Esophagus muscularis mucosa (tissue), 4 donors: ENCODE measurements at regions of chr3 and their contacts with region 1.

Region 1: DNA sequence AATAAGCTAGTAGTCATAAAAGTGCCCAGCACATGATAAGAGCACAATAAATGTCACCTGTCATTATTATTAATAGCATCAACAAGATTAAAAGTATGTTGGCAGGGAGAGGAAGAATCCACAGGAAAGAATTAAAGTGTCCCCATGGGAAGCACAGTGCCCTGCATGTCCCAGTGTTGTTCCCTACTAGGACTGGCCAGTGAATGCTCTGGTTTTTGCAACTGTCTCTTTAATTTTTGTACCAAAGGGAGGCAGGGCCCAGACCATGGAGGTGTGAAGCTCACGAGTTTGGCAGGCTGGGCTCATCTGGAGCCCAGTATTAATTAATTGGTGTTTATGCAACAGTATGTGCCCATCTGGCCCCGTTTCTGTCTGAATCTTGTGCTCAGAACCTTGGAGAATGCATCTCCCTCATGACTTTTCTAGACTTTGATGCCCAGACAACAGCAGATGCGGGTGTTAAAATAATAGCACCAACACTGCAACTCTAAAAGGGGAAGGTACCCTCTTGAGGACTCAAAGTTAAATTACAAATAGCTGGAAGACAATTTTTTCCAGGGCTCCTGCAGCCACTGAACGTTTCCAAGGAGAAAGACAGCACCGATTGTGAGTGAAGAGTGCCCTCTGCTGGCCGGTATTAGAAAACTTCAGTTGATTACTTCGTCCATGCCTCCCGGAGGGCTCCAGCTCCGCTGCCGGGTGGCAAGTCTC is 71.9 kb upstream of the SPATA12 start:
- DNase-seq: no peak
- H3K4me3 ChIP-seq: peak overlapping the region in 3 of 4 donors; percentile 8 to 15 (median 9)
- H3K27ac ChIP-seq: peak overlapping the region in 3 of 4 donors; percentile 29 to 71 (median 53)
- H3K4me1 ChIP-seq: peaks cover 15 to 44% (median 30%) of the 10 kb centered on the region in 4 donors
- H3K27me3 ChIP-seq: no peaks in the 10 kb centered on the region
- CTCF ChIP-seq: peak; percentile 72 to 88 (median 79)
- EP300 ChIP-seq: no peak
- POLR2A ChIP-seq: no peak

Region 2: GRCh38 chr3:56720849-56721248 is 267.8 kb before region 1 on chr3:
- intact Hi-C with region 1: no loop called
- DNase-seq: no peak
- H3K4me3 ChIP-seq: no peak overlapping the region
- H3K27ac ChIP-seq: no peak overlapping the region
- H3K4me1 ChIP-seq: no peaks in the 10 kb centered on the region
- H3K27me3 ChIP-seq: no peaks in the 10 kb centered on the region
- CTCF ChIP-seq: no peak
- EP300 ChIP-seq: no peak
- POLR2A ChIP-seq: no peak

Region 3: DNA sequence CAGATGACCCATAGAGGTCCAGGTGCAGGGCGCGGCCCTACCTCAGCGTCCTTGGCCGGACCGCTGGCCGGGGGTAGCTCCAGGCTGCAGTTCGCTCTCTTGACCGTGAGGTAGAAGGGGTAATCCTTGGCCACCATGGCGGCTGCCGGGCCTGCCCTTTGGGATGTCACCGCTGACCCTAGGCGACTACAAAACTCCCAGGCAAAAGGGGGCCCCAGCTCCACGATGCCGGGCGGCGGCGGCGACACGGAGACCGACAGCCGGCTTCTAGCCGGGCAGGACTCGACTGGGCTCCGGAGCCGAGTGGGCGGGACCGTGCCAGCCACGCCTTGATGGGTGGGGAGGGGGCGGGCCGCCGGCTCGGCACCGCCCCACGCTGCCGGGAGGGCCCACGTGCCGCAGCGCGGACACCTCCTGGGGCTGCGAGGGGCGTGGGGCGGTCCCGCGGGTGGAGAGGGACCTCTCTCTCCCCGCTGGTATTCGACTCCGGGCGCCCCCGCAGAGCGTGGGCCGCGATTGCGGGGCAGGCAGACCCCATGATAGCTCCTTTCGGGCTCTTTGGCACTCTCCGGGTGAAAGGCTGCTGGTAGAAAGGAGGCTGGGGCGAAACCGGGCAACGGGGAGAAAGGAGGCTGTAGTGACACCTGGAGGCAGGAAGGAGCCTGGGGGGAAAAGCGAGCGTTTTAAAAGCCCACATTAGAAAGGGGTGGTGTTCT is 186.8 kb before region 1 on chr3 and contains the start of gene ARHGEF3:
- intact Hi-C with region 1: loop called (anchors 2 kb)
- DNase-seq: no peak
- H3K4me3 ChIP-seq: peak within 1 kb of the TSS; percentile 68 to 81 (median 73)
- H3K27ac ChIP-seq: peak within 1 kb of the TSS; percentile 50 to 71 (median 62)
- H3K4me1 ChIP-seq: peaks cover 29 to 55% (median 45%) of the 10 kb centered on the region in 4 donors
- H3K27me3 ChIP-seq: no peaks in the 10 kb centered on the region
- CTCF ChIP-seq: peak; percentile 33 to 39 (median 36)
- EP300 ChIP-seq: no peak
- POLR2A ChIP-seq: peak; percentile 48
- total RNA-seq, gene ARHGEF3: 9.0 to 14.7 (median 11.7) TPM